ENCODE measurements at regions of chr16 and their contacts with region 1.

Region 1: DNA sequence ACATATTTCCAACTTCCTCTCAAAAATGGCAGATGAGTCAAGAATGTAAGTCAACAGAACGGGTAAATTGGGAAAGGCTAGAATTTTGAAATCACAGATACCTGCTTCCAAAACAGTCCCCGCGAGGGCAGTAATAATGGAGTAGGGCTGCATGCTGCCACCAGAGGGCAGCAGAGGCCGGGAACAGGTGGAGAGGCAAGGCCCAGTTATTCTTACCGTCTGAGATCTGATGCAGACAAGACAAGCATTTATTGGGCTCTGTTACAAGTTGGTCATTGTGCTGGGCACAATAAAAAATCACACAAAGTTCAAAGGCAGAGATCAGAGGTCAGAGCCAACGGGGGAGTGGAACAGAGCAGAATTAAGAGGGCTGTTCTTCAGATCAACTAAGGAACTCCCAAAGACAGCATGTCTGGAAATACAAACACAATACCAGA is 8.8 kb upstream of the MLKL start:
- DNase-seq: peak; percentile 41 to 56
- ATAC-seq: peak; percentile 77 to 93
- H3K4me3 ChIP-seq: no peak overlapping the region
- H3K27ac ChIP-seq: no peak overlapping the region
- H3K4me1 ChIP-seq: no peaks in the 10 kb centered on the region
- H3K27me3 ChIP-seq: no peaks in the 10 kb centered on the region
- CTCF ChIP-seq: peak; percentile 86 to 96 (median 87)
- POLR2A ChIP-seq: no peak

Region 2: GRCh38 chr16:74852500-74852875 is 143.0 kb after region 1 on chr16:
- in situ Hi-C with region 1: loop called in 2 of 4 experiments (anchors 10 to 25 kb)
- intact Hi-C with region 1: no loop called
- DNase-seq: no peak
- ATAC-seq: no peak
- H3K4me3 ChIP-seq: no peak overlapping the region
- H3K27ac ChIP-seq: no peak overlapping the region
- H3K4me1 ChIP-seq: no peaks in the 10 kb centered on the region
- H3K27me3 ChIP-seq: no peaks in the 10 kb centered on the region
- CTCF ChIP-seq: no peak
- POLR2A ChIP-seq: no peak

Region 3: DNA sequence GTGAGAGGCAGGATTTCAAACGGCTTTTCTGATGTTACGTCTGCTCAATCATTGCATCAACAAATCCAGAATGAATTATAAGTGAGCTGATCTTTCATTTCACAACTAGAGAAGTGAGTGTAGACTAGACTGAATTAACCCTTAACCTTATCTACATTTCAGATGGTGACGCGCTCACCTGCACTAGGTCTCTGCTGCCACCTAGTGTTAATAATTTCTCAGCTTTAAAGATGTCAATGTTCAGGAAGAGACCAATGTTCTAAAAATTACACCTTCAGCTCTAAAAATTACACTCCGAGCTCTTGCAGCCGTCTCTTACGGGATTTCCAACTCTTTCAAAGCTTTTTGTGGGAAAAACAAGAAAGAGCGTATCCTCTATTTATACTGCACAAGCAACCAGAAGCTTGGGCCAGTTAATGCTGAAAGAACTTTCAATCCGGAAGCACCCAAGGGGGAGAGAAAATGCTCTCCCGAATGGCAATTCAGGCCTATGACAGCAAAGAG is 153.3 kb after region 1 on chr16:
- in situ Hi-C with region 1: loop called (anchors 5 to 25 kb)
- intact Hi-C with region 1: loop called (anchors 1 kb)
- DNase-seq: no peak
- ATAC-seq: no peak
- H3K4me3 ChIP-seq: no peak overlapping the region
- H3K27ac ChIP-seq: no peak overlapping the region
- H3K4me1 ChIP-seq: no peaks in the 10 kb centered on the region
- H3K27me3 ChIP-seq: peaks cover 0 to 3% (median 0%) of the 10 kb centered on the region in 3 donors
- CTCF ChIP-seq: peak; percentile 44 to 81 (median 66)
- POLR2A ChIP-seq: no peak

Region 4: DNA sequence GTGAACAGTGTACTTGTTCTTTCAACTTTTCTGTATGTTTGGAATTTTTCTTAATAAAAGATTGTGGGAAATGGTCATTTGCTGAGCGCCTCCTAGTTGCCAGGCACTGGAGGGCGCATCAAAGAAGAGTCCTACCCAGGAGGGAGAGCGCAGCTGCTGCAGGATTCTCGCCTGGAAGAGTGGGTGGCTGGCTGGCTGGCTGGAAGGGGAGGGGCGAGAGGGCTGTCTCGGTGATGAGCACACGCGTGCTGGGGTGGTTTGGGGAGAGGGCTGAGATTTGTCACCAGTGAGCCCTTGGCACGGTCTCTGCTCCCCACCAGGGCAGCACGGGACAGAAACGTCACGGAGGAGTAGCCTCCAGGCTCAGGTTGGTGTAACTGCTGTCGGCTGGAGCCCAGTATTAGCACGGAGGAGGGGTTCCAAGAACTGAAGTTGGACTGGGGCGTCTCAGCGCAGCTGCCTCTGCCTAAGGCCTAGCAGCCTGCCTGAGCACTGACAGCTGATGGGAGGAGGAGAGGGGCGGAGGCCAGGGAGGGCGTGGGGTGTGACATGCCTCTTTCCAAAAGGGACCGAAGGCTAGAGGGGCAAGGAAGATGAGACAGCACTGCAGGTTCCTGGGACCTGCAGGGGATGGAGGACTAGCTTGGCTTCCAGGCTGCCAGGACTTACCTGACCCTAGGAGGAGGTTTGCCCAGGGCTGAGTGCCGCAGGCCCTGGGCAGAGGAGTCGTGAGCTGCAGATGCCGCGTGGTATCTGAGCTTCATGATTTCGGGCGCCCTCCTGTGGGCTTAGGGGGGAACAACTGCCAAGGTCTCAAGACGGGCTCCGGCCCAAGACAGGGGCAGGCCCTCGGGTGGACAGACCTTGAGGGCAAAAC is 401.4 kb after region 1 on chr16:
- in situ Hi-C with region 1: no loop called
- intact Hi-C with region 1: no loop called
- DNase-seq: peak; percentile 86 to 94
- ATAC-seq: peak; percentile 47 to 50
- H3K4me3 ChIP-seq: peak overlapping the region; percentile 32 to 38 (median 34)
- H3K27ac ChIP-seq: peak overlapping the region; percentile 97 to 99 (median 97)
- H3K4me1 ChIP-seq: peaks cover 73 to 81% of the 10 kb centered on the region in 2 donors
- H3K27me3 ChIP-seq: no peaks in the 10 kb centered on the region
- CTCF ChIP-seq: peak; percentile 92 to 98 (median 95)
- POLR2A ChIP-seq: peak in 1 of 2 donors; percentile 12